Activated naive CD4-positive, alpha-beta T cell treated with anti-CD3 and anti-CD28 coated beads for 36 hours (primary cell): ENCODE measurements at regions of chr19 and their contacts with region 1.

Region 1: GRCh38 chr19:39445265-39446111 is at the start of gene SUPT5H:
- DNase-seq: peak; percentile 99
- H3K4me3 Mint-ChIP-seq: peak within 1 kb of the TSS; percentile 99
- H3K27ac Mint-ChIP-seq: peak within 1 kb of the TSS; percentile 96
- H3K4me1 Mint-ChIP-seq: peaks cover 49% of the 10 kb centered on the region
- H3K27me3 Mint-ChIP-seq: no peaks in the 10 kb centered on the region
- total RNA-seq, gene SUPT5H: 129 to 139 TPM

Region 2: DNA sequence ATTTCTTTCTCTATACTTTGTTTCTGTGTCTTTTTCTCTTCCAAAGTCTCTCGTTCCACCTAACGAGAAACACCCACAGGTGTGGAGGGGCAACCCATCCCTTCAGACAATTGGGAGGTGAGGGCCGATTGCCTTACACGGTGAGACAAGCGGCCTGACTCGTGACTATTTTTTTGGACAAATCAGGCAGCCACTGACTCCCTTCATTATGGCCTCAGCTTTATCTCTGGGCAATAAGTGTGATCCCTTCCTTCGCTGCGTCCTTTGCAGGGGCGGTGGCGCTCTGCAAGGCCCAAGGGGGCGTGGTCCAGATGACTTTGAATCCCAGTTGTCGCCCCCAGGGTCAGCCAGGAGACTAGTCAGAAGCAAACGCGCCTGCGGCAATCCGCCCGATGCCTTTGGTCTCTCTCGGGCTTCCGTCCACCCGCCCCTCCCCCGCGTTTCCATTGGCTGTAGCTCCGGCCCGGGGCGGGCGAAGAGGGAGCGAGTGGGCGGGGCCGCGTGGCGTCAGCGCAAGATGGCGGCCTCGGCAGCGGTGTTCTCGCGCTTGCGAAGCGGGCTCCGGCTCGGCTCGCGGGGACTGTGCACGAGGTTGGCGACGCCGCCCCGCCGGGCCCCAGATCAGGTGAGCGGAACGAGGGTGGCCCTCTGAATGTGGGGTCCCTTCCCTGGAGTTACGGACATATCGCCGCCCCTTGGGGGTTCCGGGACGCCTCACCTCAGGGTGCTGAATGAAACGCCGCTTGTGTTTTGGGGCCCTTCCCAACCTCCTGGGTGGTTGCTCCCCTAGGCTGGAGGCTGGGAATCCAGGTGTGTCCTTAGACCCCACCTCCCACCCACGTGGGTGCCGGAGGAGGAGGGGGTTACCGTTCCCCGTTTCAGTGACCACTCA is 35.1 kb after region 1 on chr19 and contains the start of gene TIMM50:
- CTCF ChIA-PET with region 1: interaction called, 9 read pairs
- intact Hi-C with region 1: loop called (anchors 1 kb)
- DNase-seq: peak; percentile 99
- H3K4me3 Mint-ChIP-seq: peak within 1 kb of the TSS; percentile 92
- H3K27ac Mint-ChIP-seq: peak within 1 kb of the TSS; percentile 90
- H3K4me1 Mint-ChIP-seq: peaks cover 27% of the 10 kb centered on the region
- H3K27me3 Mint-ChIP-seq: no peaks in the 10 kb centered on the region
- total RNA-seq, gene TIMM50: 103 to 107 TPM

Region 3: GRCh38 chr19:39502640-39503417 is 57.3 kb after region 1 on chr19:
- CTCF ChIA-PET with region 1: interaction called, 15 read pairs
- intact Hi-C with region 1: loop called (anchors 2 kb)
- DNase-seq: peak; percentile 68
- H3K4me3 Mint-ChIP-seq: no peak overlapping the region
- H3K27ac Mint-ChIP-seq: no peak overlapping the region
- H3K4me1 Mint-ChIP-seq: peaks cover 34% of the 10 kb centered on the region
- H3K27me3 Mint-ChIP-seq: peaks cover 65% of the 10 kb centered on the region

Region 4: DNA sequence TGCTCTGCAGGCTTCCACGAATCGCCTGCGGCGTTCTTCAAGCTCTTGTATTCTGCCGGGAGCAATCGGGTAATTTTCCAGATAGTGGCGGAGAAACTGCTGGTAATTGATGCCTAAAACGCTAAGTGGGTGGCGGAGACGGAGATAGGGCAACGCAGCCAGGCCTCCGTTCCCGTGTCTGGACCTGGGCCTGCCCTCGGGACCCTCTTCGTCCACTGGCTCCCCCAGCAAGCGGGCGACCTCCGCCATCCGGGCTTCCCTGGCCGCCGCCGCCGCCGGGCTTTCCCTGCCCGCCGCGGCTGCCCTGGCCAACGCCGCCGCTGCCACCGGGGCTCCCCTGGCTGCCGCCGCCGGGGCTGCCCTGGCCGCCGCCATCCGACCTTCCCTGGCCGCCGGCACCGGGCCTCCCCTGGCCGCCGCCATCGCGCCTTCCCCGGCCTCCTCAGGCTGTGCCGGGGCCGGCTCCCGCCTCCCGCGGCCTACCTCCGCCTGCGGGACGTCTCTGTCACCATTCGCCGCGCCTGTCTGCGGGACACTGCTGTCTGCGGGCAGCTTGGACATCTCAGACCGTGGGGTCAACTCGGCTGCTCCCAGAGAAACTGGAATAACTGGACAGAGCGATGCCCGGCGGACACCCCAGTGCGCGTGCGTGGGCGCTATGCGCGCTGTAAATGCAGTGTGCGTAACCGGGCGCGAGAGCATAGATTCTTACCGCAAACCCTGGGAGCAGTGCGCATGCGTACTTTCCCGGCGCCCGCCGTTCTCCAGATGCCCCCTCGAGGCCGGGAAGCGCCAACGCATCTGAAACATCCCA is 94.2 kb after region 1 on chr19 and contains the start of gene EID2:
- CTCF ChIA-PET with region 1: interaction called, 61 read pairs
- intact Hi-C with region 1: loop called (anchors 1 kb)
- DNase-seq: peak; percentile 97
- H3K4me3 Mint-ChIP-seq: peak within 1 kb of the TSS; percentile 93
- H3K27ac Mint-ChIP-seq: peak within 1 kb of the TSS; percentile 97
- H3K4me1 Mint-ChIP-seq: peaks cover 61% of the 10 kb centered on the region
- H3K27me3 Mint-ChIP-seq: no peaks in the 10 kb centered on the region
- total RNA-seq, gene EID2: 7.7 to 9.1 TPM